Activated T-helper 2 cell treated with anti-CD3 and anti-CD28 coated beads, Interferon-gamma antibody, Interleukin-2, Interleukin-4, amounts not matched to agents 10 μg/mL and 5 μg/mL and 100 μg/mL, durations not matched to agents 14 hours and 24 hours and 36 hours (primary cell): ENCODE measurements at regions of chr2 and their contacts with region 1.

Region 1: GRCh38 chr2:171095014-171095582 is 65.6 kb downstream of the TLK1 start:
- DNase-seq: no peak
- H3K4me3 Mint-ChIP-seq: no peak overlapping the region
- H3K27ac Mint-ChIP-seq: peak overlapping the region; percentile 43
- H3K4me1 Mint-ChIP-seq: peaks cover 35% of the 10 kb centered on the region
- H3K27me3 Mint-ChIP-seq: no peaks in the 10 kb centered on the region

Region 2: DNA sequence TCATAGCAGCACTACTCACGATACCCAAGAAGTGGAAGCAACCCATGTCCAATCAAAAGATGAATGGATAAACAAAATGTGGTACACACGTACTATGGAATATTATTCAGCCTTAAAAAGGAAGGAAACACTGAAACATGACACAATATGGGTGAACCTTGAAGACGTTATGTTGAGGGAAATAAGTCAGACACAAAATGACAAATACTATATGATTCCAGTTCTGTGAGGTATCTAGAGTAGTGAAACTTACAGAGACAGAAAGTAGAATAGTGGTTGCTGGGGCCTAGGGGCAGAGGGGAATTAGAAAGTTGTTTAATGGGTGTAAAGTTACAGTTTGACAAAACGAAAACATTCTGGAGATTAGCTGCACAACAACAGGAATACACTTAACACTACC is 40.9 kb after region 1 on chr2:
- intact Hi-C with region 1: loop called (anchors 1 kb)
- DNase-seq: no peak
- H3K4me3 Mint-ChIP-seq: peak overlapping the region; percentile 44
- H3K27ac Mint-ChIP-seq: peak overlapping the region; percentile 94
- H3K4me1 Mint-ChIP-seq: peaks cover 23% of the 10 kb centered on the region
- H3K27me3 Mint-ChIP-seq: no peaks in the 10 kb centered on the region

Region 3: GRCh38 chr2:171141320-171141719 is 46.2 kb after region 1 on chr2:
- intact Hi-C with region 1: loop called (anchors 1 kb)
- DNase-seq: no peak
- H3K4me3 Mint-ChIP-seq: no peak overlapping the region
- H3K27ac Mint-ChIP-seq: no peak overlapping the region
- H3K4me1 Mint-ChIP-seq: peaks cover 52% of the 10 kb centered on the region
- H3K27me3 Mint-ChIP-seq: no peaks in the 10 kb centered on the region